Right ventricle myocardium inferior (tissue), 1 donor: ENCODE measurements at regions of chr13 and their contacts with region 1.

Region 1: DNA sequence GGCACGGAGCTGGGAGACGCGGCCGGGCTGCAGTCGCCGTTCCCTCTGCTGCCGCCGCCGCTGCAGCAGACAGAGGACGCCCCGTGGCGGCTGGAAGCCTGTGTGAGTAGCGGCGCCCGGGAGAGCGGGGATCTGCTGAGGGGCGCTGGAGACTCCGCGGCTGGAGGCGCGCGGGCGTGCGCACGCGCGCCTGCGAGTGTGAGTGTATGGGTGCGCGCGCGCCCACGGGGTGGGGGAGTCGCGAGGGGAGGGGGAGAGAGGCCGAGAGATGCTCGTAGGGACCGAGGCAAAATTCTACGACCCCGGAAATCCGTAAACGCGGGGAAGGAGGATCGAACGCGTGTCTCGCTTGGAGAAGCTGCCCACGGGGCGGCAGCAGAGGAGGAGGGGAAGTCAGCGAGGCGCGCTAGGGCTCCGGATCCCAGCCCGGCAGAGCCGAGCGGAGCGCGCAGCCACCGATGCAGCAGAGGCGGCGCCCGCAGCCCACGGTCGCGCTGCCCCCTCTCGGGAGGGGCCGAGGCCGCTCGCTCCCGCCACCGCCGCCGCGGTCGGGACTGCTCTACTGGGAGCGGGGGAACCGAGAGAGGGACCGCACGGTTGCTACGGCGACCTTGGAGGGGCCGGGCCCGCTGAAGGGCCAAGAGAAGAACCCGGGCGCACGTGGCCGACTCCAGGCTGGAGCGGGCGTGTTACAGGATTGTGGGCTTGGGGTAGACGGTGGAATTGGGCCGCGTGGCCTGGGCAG is at the start of gene ENOX1:
- DNase-seq: peak; percentile 81
- ATAC-seq: peak; percentile 87
- total RNA-seq, gene ENOX1: 6.1 TPM

Region 2: DNA sequence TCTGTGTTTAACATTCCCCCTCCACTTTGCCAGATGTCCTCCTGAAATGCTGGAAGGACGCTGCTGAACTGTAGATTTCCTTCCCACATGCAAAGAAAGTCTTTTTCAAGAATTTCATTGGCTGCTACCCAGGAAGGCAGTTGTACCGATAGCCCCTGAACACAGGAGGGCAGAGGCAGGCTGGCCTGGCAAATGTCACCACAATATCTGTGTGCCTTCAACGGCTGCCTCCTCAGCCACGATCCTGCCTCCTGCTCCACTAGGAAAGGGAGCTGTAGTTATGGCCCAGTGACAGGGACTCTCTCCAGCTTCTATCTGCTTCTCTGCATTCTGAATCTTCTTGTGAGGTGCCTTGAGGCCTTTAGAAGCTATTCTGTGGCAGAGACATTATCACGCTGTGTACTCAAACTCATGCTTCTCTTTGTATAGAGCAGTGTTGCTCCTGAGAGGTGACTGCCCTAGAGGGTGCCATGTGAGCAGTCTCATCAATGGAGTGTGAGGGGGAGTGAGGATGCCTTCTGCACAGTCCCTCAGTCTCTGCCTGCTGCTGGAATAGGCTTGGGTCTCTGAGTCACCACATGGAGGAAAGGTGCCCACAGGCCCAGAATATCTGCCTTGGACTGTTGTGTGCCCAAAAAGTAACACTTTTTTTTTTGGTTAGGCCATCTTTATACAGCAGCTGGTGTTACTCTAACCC is 483.8 kb before region 1 on chr13:
- intact Hi-C with region 1: loop called (anchors 5 kb)
- DNase-seq: no peak
- ATAC-seq: peak; percentile 86

Region 3: DNA sequence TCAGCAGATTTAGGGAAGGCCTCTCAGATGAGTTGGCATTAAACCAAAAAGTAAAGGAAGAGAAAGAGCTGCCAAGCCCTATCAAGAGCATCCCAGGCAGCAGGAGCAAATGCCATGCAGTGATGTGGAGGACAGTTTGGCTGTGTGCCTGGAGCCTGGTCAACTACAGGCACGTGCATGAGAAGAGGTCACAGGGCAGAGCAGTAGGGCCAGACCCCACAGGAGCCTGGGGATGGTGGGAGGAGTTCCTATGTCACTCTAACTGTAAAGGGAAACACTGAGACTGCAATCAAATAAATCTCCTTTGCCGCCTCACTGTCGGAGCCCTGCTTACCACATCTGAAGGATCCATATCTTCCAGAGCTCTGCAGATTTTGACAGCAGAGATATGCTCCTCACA is 240.7 kb before region 1 on chr13:
- intact Hi-C with region 1: loop called (anchors 10 kb)
- DNase-seq: no peak
- ATAC-seq: peak; percentile 78

Region 4: GRCh38 chr13:43611281-43612273 is 175.4 kb before region 1 on chr13:
- intact Hi-C with region 1: loop called (anchors 10 kb)
- DNase-seq: no peak
- ATAC-seq: no peak

Region 5: GRCh38 chr13:43686557-43686956 is 100.4 kb before region 1 on chr13:
- intact Hi-C with region 1: loop called (anchors 5 kb)
- DNase-seq: no peak
- ATAC-seq: peak; percentile 80

Region 6: GRCh38 chr13:43767341-43767931 is 19.5 kb before region 1 on chr13:
- intact Hi-C with region 1: loop called (anchors 1 kb)
- DNase-seq: no peak
- ATAC-seq: peak; percentile 91